Aorta (tissue), 5 donors: ENCODE measurements at regions of chr2 and their contacts with region 1.

Region 1: GRCh38 chr2:72150157-72150865 is 2.6 kb upstream of the CYP26B1 start:
- DNase-seq: peak; percentile 74 to 88
- ATAC-seq: peak; percentile 89
- H3K4me3 ChIP-seq: no peak overlapping the region
- H3K27ac ChIP-seq: no peak overlapping the region
- H3K4me1 ChIP-seq: no peaks in the 10 kb centered on the region
- H3K27me3 ChIP-seq: no peaks in the 10 kb centered on the region

Region 2: GRCh38 chr2:71609958-71610357 is 540.4 kb before region 1 on chr2:
- intact Hi-C with region 1: loop called (anchors 5 to 10 kb)
- DNase-seq: no peak
- ATAC-seq: no peak
- H3K4me3 ChIP-seq: no peak overlapping the region
- H3K27ac ChIP-seq: no peak overlapping the region
- H3K4me1 ChIP-seq: no peaks in the 10 kb centered on the region
- H3K27me3 ChIP-seq: no peaks in the 10 kb centered on the region

Region 3: DNA sequence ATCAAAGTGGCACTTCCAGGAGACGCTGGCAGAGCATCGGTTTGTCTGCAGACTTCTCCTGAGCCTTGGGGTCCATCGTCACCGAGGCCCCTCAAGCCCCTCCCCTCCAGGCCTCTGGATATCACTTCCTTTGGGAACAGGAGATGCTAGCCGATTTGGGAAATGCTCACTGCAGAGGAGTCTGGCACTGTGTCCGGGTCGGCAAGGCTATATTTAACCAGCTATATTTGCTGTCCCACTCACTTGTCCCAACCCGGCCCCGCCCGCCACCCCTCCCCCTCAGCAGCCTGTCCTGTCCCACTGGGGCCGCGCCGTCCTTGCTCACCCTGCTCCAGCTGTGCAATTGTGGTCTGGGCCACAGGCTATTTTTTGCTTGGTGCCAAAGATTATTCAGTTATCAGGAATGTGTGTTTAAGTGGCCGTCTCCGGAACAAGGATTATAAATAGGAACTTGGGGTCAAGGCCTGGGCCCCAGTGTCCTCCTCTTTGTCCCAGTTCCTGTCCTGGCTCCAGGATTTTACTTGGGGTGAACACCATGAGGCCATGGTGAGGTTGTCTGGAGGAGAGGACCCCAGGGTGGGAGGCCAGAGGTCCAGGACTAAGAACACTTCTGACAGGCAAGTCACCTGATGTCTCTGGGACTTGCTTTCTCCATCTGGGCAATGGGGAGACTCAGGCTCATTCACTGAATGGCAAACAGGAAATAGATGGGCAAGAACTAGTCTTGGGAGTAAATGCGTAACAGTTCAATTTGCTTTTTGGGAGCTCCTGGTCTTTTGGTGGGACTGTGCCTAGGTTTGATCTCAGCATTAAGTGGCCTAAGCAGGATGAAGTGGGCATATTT is 433.3 kb before region 1 on chr2:
- intact Hi-C with region 1: loop called in 1 of 2 experiments (anchors 10 kb)
- DNase-seq: peak; percentile 94 to 98
- ATAC-seq: peak; percentile 89
- H3K4me3 ChIP-seq: no peak overlapping the region
- H3K27ac ChIP-seq: peak overlapping the region; percentile 88 to 90
- H3K4me1 ChIP-seq: peaks cover 10 to 13% of the 10 kb centered on the region in 2 donors
- H3K27me3 ChIP-seq: no peaks in the 10 kb centered on the region

Region 4: GRCh38 chr2:71923887-71924533 is 226.3 kb before region 1 on chr2:
- intact Hi-C with region 1: loop called (anchors 1 to 2 kb)
- DNase-seq: peak in 1 of 2 donors; percentile 71
- ATAC-seq: peak; percentile 82
- H3K4me3 ChIP-seq: no peak overlapping the region
- H3K27ac ChIP-seq: no peak overlapping the region
- H3K4me1 ChIP-seq: no peaks in the 10 kb centered on the region
- H3K27me3 ChIP-seq: no peaks in the 10 kb centered on the region